ENCODE measurements at regions of chr11 and their contacts with region 1.

Region 1: DNA sequence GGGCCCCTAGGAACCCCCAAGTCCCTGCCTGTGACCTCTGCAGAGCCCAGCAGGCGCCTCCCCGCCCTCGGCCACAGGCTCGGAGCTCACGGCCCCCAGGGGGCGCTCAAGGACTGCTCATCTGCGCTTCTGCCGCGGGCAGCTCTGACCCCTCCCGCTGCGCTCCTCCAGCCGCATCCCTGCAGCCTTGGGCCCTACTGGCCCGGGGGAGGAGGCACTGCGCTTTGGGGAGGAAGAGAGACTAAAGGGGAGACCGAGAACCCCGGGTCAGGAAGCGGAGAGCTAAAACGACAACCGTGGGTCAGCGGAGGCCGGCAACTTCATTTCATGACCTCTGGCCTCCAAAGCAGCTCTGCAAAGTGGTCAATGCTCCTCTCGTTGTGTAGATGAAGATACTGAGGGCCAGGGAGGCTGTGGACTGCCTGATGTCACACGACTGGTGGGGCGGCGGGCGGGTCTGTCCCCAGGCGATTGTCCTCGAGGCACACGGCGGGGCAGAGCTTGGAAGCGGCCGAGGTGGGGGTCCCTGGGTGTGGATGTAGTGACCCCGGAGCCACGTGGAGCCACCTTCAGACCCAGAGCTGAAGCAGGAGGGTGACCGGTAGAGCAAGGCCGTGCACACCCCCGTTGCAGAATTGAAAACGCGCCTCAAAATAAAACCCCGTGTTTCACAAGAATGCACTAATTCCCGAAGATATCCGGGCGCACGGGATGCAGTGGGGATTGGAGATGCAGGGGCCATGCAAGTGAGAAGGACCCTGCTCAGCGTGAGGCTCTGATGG is 2.7 kb upstream of the KRTAP5-6 start:
- DNase-seq: peak; percentile 63 to 90 (median 82)
- ATAC-seq: peak; percentile 85
- H3K4me3 ChIP-seq: no peak overlapping the region
- H3K4me3 Mint-ChIP-seq: no peak overlapping the region
- H3K27ac ChIP-seq: no peak overlapping the region
- H3K27ac Mint-ChIP-seq: no peak overlapping the region
- H3K4me1 ChIP-seq: peaks cover 16% of the 10 kb centered on the region
- H3K4me1 Mint-ChIP-seq: peaks cover 3% of the 10 kb centered on the region
- H3K27me3 ChIP-seq: peaks cover 0 to 7% of the 10 kb centered on the region in 2 experiments
- H3K27me3 Mint-ChIP-seq: peaks cover 16% of the 10 kb centered on the region
- CTCF ChIP-seq: peak; percentile 64

Region 2: DNA sequence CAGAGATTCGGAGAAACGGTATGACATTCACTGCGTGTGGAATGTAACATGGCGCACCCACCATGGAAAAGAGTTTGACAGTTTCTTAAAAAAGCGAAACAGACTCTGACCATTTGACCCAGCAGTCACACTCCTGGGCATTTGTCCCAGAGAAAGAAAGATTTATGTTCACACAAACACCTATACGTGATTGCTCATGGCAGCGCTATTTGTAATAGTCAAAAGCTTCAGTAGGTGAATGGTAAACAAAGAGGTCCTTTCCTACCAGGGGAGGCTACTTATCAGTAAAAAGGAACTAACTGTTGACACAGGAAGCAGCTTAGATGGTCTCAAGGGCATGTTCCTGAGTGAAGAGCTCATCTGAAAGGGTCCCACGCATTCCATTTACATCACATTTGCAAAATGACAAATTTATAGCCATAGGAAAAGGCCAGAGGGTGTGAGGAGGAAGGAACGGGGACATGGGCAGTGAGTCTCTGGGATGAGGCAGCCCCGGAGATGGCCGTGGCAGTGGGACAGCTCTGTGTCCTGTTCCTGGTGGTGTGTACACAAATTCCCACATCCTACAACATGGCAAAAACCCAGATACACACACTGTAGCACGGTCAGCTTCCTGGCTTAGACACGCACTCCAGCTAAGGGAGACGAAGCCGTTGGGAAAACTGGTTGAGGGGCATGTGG is 11.9 kb before region 1 on chr11:
- CTCF ChIA-PET with region 1: interaction called, 39 read pairs
- POLR2A ChIA-PET with region 1: no interaction called
- intact Hi-C with region 1: no loop called
- DNase-seq: no peak
- ATAC-seq: no peak
- H3K4me3 ChIP-seq: no peak overlapping the region
- H3K4me3 Mint-ChIP-seq: no peak overlapping the region
- H3K27ac ChIP-seq: no peak overlapping the region
- H3K27ac Mint-ChIP-seq: no peak overlapping the region
- H3K4me1 ChIP-seq: no peaks in the 10 kb centered on the region
- H3K4me1 Mint-ChIP-seq: no peaks in the 10 kb centered on the region
- H3K27me3 ChIP-seq: peaks cover 0 to 5% of the 10 kb centered on the region in 2 experiments
- H3K27me3 Mint-ChIP-seq: peaks cover 13% of the 10 kb centered on the region
- CTCF ChIP-seq: no peak

Region 3: DNA sequence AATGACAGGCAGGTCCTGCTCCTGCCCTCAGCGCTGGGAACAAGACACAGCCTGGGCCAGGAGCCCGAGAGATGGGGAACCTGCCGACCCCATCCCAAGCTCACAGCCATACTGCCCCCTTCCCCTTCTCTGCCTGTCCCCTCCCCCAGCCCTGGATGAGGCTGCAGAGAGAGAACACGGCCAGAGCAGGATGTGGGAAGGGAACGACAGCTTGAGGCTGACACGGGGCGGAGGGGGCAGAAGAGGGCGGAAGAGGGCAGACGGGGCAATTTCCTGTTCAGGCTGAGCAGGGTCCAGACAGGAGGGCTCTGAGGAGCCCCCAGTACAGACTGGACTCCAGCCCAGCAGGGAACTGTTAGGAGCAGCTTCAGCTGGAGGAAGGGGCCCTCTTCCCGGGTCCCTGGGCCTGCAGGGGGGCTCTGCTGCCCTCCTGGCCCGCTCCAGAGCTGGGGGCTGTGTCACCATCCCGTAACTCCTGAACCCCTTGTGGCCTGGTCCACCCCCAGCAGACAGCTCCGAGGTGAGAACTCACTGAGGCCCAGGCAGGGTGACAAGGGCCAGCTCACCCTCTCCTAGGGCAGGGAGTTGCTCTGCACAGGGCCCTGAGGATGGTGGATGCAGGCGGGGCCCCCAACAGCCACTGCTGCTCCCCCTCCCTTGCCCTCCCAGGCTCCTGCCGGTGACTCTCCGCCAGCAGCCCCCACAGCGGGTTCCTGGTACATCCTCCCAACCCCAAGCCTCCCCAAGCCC is 63.8 kb after region 1 on chr11:
- CTCF ChIA-PET with region 1: interaction called, 17 read pairs
- POLR2A ChIA-PET with region 1: no interaction called
- intact Hi-C with region 1: no loop called
- DNase-seq: peak in 8 of 9 experiments; percentile 49 to 84 (median 67)
- ATAC-seq: peak; percentile 67
- H3K4me3 ChIP-seq: peak overlapping the region; percentile 46 to 53
- H3K4me3 Mint-ChIP-seq: peak overlapping the region; percentile 78
- H3K27ac ChIP-seq: peak overlapping the region; percentile 58 to 79
- H3K27ac Mint-ChIP-seq: peak overlapping the region; percentile 86
- H3K4me1 ChIP-seq: peaks cover 89% of the 10 kb centered on the region
- H3K4me1 Mint-ChIP-seq: peaks cover 76% of the 10 kb centered on the region
- H3K27me3 ChIP-seq: no peaks in the 10 kb centered on the region
- H3K27me3 Mint-ChIP-seq: no peaks in the 10 kb centered on the region
- CTCF ChIP-seq: no peak

Region 4: GRCh38 chr11:1820463-1821325 is 126.4 kb after region 1 on chr11:
- CTCF ChIA-PET with region 1: interaction called, 49 read pairs
- POLR2A ChIA-PET with region 1: no interaction called
- intact Hi-C with region 1: no loop called
- DNase-seq: no peak
- ATAC-seq: no peak
- H3K4me3 ChIP-seq: no peak overlapping the region
- H3K4me3 Mint-ChIP-seq: no peak overlapping the region
- H3K27ac ChIP-seq: no peak overlapping the region
- H3K27ac Mint-ChIP-seq: no peak overlapping the region
- H3K4me1 ChIP-seq: no peaks in the 10 kb centered on the region
- H3K4me1 Mint-ChIP-seq: no peaks in the 10 kb centered on the region
- H3K27me3 ChIP-seq: no peaks in the 10 kb centered on the region
- H3K27me3 Mint-ChIP-seq: peaks cover 2% of the 10 kb centered on the region
- CTCF ChIP-seq: no peak

Region 5: GRCh38 chr11:1845561-1846452 is 151.6 kb after region 1 on chr11:
- CTCF ChIA-PET with region 1: interaction called, 24 read pairs
- POLR2A ChIA-PET with region 1: no interaction called
- intact Hi-C with region 1: no loop called
- DNase-seq: peak in 4 of 9 experiments; percentile 51 to 79 (median 60)
- ATAC-seq: peak; percentile 68
- H3K4me3 ChIP-seq: peak overlapping the region in 1 of 2 experiments; percentile 1
- H3K4me3 Mint-ChIP-seq: peak overlapping the region; percentile 80
- H3K27ac ChIP-seq: peak overlapping the region in 1 of 2 experiments; percentile 57
- H3K27ac Mint-ChIP-seq: peak overlapping the region; percentile 87
- H3K4me1 ChIP-seq: peaks cover 68% of the 10 kb centered on the region
- H3K4me1 Mint-ChIP-seq: peaks cover 61% of the 10 kb centered on the region
- H3K27me3 ChIP-seq: no peaks in the 10 kb centered on the region
- H3K27me3 Mint-ChIP-seq: no peaks in the 10 kb centered on the region
- CTCF ChIP-seq: no peak

Region 6: DNA sequence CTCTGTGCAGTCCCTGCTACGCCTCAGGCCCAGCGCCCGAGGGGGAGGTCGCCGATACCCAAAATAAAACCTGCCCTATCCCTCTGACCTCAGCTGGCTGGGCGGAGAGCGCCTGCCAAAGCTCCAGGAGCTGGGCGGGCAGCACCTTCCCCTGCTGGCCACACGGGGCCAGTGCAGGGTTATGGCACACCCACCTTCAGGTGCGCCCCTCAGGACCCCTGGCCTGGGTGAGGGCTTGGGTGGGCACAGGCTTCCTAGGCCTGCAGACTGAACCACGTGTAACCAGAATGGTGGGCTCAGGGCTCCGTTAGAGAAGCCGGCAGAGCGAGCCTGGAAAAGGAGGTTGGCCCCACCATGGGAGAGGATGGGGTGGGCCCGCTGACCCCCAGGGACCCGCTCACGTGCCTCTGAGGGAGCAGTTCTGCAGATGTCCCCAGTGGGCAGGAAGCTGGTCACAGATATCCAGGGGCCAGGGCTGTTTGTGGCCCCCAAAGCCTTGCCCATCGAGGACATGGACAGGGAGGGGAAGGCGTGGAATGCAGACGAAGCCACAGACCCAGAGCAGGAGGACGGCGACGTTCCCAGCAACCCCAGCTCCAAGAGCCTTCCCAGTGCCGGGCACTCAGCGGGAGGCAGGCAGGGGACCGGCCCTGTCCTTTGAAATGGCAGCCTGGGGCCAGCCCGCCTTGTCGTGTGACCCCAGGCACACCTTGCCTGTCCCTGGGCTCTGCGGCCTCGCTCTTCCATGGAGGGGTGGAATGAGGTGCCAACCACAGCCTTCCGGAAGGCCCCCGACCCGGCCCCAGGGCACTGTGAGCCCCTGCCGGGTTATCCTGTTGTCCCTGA is 223.6 kb after region 1 on chr11:
- CTCF ChIA-PET with region 1: interaction called, 10 read pairs
- POLR2A ChIA-PET with region 1: no interaction called
- intact Hi-C with region 1: no loop called
- DNase-seq: peak in 2 of 9 experiments; percentile 31 to 44
- ATAC-seq: peak; percentile 54
- H3K4me3 ChIP-seq: no peak overlapping the region
- H3K4me3 Mint-ChIP-seq: no peak overlapping the region
- H3K27ac ChIP-seq: no peak overlapping the region
- H3K27ac Mint-ChIP-seq: no peak overlapping the region
- H3K4me1 ChIP-seq: peaks cover 11% of the 10 kb centered on the region
- H3K4me1 Mint-ChIP-seq: peaks cover 26% of the 10 kb centered on the region
- H3K27me3 ChIP-seq: peaks cover 0 to 2% of the 10 kb centered on the region in 2 experiments
- H3K27me3 Mint-ChIP-seq: peaks cover 11% of the 10 kb centered on the region
- CTCF ChIP-seq: peak; percentile 29

Measured in CD8-positive, alpha-beta T cell (primary cell).